ENCODE measurements at regions of chrX and their contacts with region 1.

Region 1: DNA sequence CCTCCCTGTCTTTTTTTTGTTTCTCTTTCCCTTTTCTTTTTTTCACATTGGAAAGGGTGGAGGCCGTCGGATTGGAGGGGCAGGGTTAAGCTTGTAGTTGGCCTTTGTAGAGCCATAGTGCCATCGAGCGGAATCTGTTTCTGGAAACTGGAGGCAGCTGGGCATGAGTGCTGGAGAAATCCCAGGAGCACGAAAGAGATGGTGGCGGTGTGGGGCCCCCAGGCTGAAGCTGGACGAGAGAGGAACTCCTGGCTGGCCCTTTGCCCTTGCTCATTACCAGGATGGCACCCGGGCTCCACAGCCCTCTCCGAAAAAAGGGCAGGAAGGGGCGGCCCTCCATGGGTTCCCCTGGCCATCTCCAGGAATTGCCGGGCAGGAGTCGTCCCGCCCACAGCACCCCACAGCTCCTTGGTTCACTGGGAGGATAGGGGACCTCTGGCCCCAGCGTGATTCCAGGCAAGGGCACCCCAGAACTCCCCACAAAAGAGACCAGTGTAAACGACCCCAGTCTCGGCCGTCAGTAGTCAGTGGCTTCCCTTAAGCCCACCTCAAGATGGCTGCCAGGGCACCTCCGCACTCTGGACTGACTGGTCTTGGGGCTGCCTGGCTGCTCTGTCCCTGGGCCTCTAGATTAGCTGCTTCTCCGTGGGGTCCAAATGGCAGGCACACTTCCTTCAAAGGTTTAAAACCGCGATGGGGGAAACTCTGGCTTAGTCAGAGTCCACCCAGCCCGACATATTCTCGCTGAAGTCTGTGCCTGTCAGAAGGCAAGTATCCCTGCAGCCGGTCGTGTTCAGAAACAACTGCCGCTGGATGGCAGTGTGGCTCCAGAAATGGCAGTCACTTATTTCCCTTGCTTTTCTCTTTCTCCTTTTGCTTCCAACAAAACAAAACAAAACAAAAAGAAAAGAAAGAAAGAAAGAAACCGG is 74.1 kb downstream of the NBDY start:
- DNase-seq: peak; percentile 92

Region 2: GRCh38 chrX:56978172-56978571 is 175.0 kb after region 1 on chrX:
- intact Hi-C with region 1: loop called in 1 of 2 experiments (anchors 10 kb)
- DNase-seq: no peak

Region 3: DNA sequence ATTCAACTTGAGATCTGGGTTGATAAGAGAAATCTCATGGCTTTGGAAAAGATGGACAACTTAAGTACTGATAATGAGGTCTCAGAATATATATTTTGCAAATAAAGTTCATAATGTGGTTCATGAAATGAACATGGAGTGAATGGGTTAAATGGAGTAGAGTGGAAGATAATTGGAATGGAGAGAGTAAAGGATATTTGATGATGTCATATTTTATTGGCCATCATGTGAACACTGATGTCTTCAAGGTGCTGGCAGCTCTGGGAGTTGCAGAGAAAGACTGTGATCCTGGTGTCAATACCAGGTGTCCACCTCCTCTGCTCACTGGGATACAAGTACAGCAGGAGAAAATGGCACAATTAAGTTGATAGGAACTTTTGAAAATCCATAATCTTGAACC is 1241.0 kb after region 1 on chrX:
- intact Hi-C with region 1: no loop called
- DNase-seq: no peak

Measured in posterior vena cava (tissue), 2 donors.